ENCODE measurements at regions of chr3 and their contacts with region 1.

Region 1: DNA sequence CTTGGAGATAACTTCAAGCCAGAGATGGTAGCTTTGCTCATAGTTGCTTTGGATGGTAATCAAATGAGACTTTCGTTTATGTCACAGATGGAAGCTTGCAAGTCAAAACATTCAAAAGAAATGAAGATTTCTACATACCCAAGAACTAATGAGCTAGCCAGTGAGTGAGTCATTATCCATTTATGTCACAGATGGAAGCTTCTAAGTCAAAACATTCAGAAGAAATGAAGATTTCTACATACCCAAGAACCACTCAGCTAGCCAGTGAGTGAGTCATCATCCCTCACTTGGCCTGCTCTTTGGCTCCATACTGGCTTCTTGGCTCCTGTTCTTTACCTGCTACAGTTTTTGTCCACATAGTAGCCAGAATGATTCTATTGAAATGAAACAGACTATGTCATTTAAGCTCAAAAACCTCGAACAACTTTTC is 559.8 kb upstream of the CBLB start:
- DNase-seq: peak; percentile 73
- ATAC-seq: peak; percentile 82
- H3K4me3 Mint-ChIP-seq: no peak overlapping the region
- H3K27ac Mint-ChIP-seq: peak overlapping the region; percentile 98
- H3K4me1 Mint-ChIP-seq: peaks cover 49% of the 10 kb centered on the region
- H3K27me3 Mint-ChIP-seq: no peaks in the 10 kb centered on the region

Region 2: DNA sequence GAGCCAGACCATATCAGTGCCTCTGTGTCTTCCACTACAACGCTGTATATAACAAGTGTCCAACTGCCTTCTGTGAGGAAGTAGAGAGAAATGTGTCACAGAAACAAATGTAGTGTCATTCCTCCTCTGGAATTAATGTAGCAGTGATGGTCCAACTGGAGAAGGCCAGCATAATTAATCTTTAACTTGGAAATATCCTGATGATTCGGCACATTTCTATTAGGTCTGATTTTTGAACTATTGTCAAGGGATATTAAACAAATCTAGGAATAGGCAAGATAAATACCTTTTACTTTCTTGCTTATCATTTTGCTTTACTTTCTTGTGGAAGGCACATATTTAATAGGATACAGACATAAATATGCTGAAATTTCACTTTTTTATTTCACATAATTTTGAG is 1508.1 kb before region 1 on chr3:
- CTCF ChIA-PET with region 1: no interaction called
- POLR2A ChIA-PET with region 1: no interaction called
- intact Hi-C with region 1: no loop called
- DNase-seq: no peak
- ATAC-seq: no peak
- H3K4me3 Mint-ChIP-seq: no peak overlapping the region
- H3K27ac Mint-ChIP-seq: no peak overlapping the region
- H3K4me1 Mint-ChIP-seq: no peaks in the 10 kb centered on the region
- H3K27me3 Mint-ChIP-seq: no peaks in the 10 kb centered on the region

Region 3: DNA sequence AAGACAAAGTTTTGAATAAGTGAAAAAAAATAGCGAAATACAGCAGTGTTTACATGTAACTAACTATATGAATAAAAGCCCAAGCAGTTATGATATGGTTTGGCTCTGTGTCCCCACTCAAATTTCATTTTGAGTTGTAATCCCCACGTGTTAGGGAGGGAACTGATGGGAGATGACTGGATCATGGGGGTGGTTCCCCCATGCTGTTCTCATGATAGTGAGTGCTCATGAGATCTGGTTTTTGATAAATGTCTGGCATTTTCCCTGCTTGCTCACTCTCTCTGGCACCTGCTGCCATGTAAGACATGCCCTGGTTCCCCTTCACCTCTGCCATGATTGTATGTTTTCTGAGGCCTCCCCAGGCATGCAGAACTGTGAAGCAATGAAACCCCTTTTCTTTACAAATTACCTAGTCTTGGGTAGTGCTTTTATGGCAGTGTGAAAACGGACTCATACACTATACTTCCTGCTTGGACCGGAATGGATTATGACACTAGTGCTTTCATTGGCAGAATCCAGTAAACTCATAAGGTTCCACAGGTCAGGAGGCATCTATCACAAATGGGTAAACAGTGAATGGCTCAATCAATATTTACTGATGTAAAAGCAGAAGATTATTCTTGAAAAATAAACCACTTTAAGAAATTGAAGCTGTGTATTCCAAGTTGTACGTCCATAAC is 751.8 kb before region 1 on chr3:
- CTCF ChIA-PET with region 1: no interaction called
- POLR2A ChIA-PET with region 1: no interaction called
- intact Hi-C with region 1: loop called (anchors 1 kb)
- DNase-seq: peak; percentile 74
- ATAC-seq: peak; percentile 94
- H3K4me3 Mint-ChIP-seq: peak overlapping the region; percentile 27
- H3K27ac Mint-ChIP-seq: peak overlapping the region; percentile 87
- H3K4me1 Mint-ChIP-seq: peaks cover 27% of the 10 kb centered on the region
- H3K27me3 Mint-ChIP-seq: no peaks in the 10 kb centered on the region

Region 4: GRCh38 chr3:106013971-106014370 is 414.6 kb before region 1 on chr3:
- CTCF ChIA-PET with region 1: no interaction called
- POLR2A ChIA-PET with region 1: no interaction called
- intact Hi-C with region 1: loop called in 1 of 2 experiments (anchors 5 kb)
- DNase-seq: peak; percentile 19
- ATAC-seq: peak; percentile 72
- H3K4me3 Mint-ChIP-seq: no peak overlapping the region
- H3K27ac Mint-ChIP-seq: peak overlapping the region; percentile 68
- H3K4me1 Mint-ChIP-seq: peaks cover 50% of the 10 kb centered on the region
- H3K27me3 Mint-ChIP-seq: no peaks in the 10 kb centered on the region

Region 5: DNA sequence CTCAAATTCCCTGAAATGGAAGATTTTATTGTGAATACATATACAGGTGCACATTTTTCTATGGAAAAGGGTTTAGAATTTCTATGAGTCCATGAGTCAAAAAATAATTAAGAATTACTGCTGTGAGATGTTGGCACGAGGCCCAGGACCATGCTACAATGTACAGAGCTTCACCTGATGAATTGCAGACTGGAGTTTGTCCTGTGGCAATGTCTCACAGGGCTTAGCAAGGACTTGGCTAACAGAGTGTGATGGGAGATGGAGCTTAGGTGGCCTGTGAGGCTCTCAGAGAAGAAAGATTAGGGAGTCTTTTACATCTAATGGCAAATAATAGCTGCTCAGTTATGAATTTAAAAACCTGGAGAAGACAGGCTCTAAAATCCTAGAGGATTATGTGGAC is 340.3 kb before region 1 on chr3:
- CTCF ChIA-PET with region 1: no interaction called
- POLR2A ChIA-PET with region 1: no interaction called
- intact Hi-C with region 1: no loop called
- DNase-seq: no peak
- ATAC-seq: no peak
- H3K4me3 Mint-ChIP-seq: no peak overlapping the region
- H3K27ac Mint-ChIP-seq: no peak overlapping the region
- H3K4me1 Mint-ChIP-seq: peaks cover 1% of the 10 kb centered on the region
- H3K27me3 Mint-ChIP-seq: no peaks in the 10 kb centered on the region

Region 6: GRCh38 chr3:106206146-106206545 is 222.4 kb before region 1 on chr3:
- CTCF ChIA-PET with region 1: no interaction called
- POLR2A ChIA-PET with region 1: no interaction called
- intact Hi-C with region 1: loop called in 1 of 2 experiments (anchors 5 kb)
- DNase-seq: peak; percentile 31
- ATAC-seq: peak; percentile 67
- H3K4me3 Mint-ChIP-seq: peak overlapping the region; percentile 65
- H3K27ac Mint-ChIP-seq: peak overlapping the region; percentile 94
- H3K4me1 Mint-ChIP-seq: peaks cover 50% of the 10 kb centered on the region
- H3K27me3 Mint-ChIP-seq: no peaks in the 10 kb centered on the region

Region 7: DNA sequence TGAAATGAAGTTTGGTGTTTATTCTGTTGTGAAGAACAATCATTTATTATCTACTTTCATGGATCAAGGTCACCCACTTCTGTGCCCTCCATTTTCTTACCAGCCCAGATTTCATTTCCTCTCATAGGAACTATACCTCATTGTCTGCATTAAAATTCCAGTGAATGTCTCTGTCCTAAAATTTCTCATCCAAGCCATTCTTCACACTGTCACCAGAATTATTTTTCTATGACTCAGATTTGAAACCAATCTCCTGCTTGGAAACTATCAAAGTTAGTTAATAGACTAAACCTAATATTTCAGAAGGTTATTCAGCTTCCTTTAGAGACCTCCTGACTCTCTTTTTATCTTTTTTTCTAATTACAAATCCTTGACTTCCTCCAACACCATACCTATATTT is 195.6 kb before region 1 on chr3:
- CTCF ChIA-PET with region 1: no interaction called
- POLR2A ChIA-PET with region 1: no interaction called
- intact Hi-C with region 1: loop called in 1 of 2 experiments (anchors 5 kb)
- DNase-seq: no peak
- ATAC-seq: no peak
- H3K4me3 Mint-ChIP-seq: no peak overlapping the region
- H3K27ac Mint-ChIP-seq: peak overlapping the region; percentile 52
- H3K4me1 Mint-ChIP-seq: peaks cover 46% of the 10 kb centered on the region
- H3K27me3 Mint-ChIP-seq: no peaks in the 10 kb centered on the region

Region 8: GRCh38 chr3:106288781-106289180 is 139.8 kb before region 1 on chr3:
- CTCF ChIA-PET with region 1: no interaction called
- POLR2A ChIA-PET with region 1: no interaction called
- intact Hi-C with region 1: no loop called
- DNase-seq: no peak
- ATAC-seq: no peak
- H3K4me3 Mint-ChIP-seq: no peak overlapping the region
- H3K27ac Mint-ChIP-seq: no peak overlapping the region
- H3K4me1 Mint-ChIP-seq: peaks cover 8% of the 10 kb centered on the region
- H3K27me3 Mint-ChIP-seq: no peaks in the 10 kb centered on the region

Region 9: DNA sequence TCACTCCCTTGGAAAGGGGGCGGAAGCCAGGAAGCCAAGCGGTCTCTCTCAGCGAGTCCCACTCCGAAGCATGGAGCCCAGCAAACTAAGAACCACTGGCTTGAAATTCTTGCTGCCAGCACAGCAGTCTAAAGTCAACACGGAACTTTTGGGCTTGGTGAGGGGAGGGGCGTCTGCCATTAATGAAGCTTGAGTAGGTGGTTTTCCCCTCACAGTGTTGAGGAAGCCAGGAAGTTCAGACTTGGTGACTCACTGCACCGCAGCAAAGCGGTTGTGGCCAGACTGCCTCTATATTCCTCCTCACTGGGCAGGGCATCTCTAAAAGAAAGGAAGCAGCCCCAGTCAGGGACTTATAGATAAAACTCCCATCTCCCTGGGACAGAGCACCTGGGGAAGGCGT is 105.6 kb after region 1 on chr3:
- CTCF ChIA-PET with region 1: no interaction called
- POLR2A ChIA-PET with region 1: no interaction called
- intact Hi-C with region 1: loop called (anchors 1 to 2 kb)
- DNase-seq: peak; percentile 74
- ATAC-seq: peak; percentile 93
- H3K4me3 Mint-ChIP-seq: no peak overlapping the region
- H3K27ac Mint-ChIP-seq: peak overlapping the region; percentile 30
- H3K4me1 Mint-ChIP-seq: peaks cover 26% of the 10 kb centered on the region
- H3K27me3 Mint-ChIP-seq: peaks cover 2% of the 10 kb centered on the region